ENCODE measurements at regions of chr5 and their contacts with region 1.

Region 1: DNA sequence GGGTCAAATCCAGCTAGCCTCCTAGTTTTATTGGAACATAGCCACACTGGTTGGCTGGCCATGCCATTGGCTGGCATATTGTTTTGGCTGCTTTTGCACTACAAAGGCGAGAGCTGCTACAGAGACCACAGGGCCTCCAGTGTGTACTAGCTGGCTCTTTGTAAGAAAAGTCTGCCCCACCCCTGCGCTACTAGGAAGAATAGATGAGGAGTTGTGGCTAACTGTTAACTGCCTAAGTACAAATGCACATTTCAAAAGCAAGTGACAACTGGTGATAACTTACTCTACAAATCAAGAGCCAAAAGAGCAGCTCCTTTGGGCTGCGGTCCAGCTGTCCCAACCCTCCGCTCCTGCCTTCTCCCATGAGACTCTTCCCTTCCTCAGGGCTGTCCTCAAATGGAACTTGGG is 63.9 kb downstream of the SERINC5 start:
- DNase-seq: peak; percentile 35 to 62
- ATAC-seq: peak; percentile 49 to 67 (median 54)
- H3K4me3 ChIP-seq: peak overlapping the region; percentile 9
- H3K27ac ChIP-seq: peak overlapping the region; percentile 58
- H3K4me1 ChIP-seq: peaks cover 38% of the 10 kb centered on the region
- H3K27me3 ChIP-seq: no peaks in the 10 kb centered on the region
- CTCF ChIP-seq: no peak

Region 2: DNA sequence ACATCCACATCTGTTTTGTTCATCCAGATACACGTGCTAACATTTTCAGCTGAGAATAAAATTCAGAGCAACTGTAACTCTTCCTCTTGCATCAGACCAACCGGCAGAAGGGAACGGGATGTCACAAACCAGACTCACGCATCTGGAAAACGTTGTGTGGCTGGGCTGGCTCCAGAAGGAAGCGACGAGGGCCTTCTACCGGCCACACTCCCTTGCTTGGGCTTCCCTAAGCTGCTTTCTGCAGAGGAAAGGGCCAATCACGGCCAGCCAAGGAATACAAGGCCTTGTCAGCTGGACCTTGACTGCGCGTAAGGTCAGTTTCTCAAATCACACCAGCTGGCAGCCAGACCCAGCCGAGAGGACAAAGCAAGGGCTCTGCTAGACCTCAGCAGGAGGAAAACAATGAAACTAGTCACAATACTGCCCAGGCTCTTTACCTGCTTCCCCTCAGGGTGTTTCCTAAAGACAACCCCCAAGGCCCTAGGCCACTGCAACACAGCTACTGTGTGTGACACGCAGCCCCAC is 50.8 kb before region 1 on chr5:
- intact Hi-C with region 1: loop called in 1 of 2 experiments (anchors 10 kb)
- DNase-seq: peak; percentile 85 to 94
- ATAC-seq: peak; percentile 92 to 97 (median 94)
- H3K4me3 ChIP-seq: no peak overlapping the region
- H3K27ac ChIP-seq: peak overlapping the region; percentile 80
- H3K4me1 ChIP-seq: peaks cover 24% of the 10 kb centered on the region
- H3K27me3 ChIP-seq: no peaks in the 10 kb centered on the region
- CTCF ChIP-seq: no peak

Region 3: DNA sequence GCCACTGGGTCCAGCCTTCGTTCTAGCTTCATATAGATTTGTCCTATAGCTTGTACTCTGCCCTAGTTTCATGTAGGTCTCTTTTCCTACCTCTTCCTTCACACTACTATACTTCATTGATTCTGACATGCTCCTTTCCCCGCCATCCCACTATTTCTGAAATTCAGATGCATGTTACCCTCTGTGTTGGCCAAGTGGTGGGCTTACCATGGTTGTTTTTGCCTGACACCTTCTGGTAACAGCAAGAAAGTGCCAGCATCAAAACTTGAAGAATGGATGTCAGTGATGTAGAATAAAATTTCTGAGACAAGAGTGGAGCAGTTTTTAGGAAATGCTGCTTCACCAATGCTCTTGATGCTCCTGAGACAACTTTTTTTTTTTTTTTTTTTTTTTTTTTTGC is 83.4 kb after region 1 on chr5:
- intact Hi-C with region 1: no loop called
- DNase-seq: no peak
- ATAC-seq: peak in 2 of 4 donors; percentile 64 to 77
- H3K4me3 ChIP-seq: no peak overlapping the region
- H3K27ac ChIP-seq: no peak overlapping the region
- H3K4me1 ChIP-seq: no peaks in the 10 kb centered on the region
- H3K27me3 ChIP-seq: no peaks in the 10 kb centered on the region
- CTCF ChIP-seq: peak; percentile 36

Measured in psoas muscle (tissue), 8 donors.